Heart left ventricle (tissue), 16 donors: ENCODE measurements at regions of chr6 and their contacts with region 1.

Region 1: GRCh38 chr6:29976588-29977424 is 34.5 kb downstream of the HLA-A start:
- DNase-seq: peak; percentile 91 to 93 (median 92)
- ATAC-seq: peak; percentile 89 to 96 (median 95)
- H3K4me3 ChIP-seq: peak overlapping the region; percentile 28 to 69 (median 60)
- H3K27ac ChIP-seq: peak overlapping the region; percentile 87 to 99 (median 95)
- H3K4me1 ChIP-seq: peaks cover 0 to 28% (median 17%) of the 10 kb centered on the region in 12 donors
- H3K27me3 ChIP-seq: peaks cover 0 to 11% (median 0%) of the 10 kb centered on the region in 9 donors
- CTCF ChIP-seq: peak in 7 of 12 donors; percentile 12 to 48 (median 32)
- POLR2A ChIP-seq: peak in 1 of 2 donors; percentile 55

Region 2: GRCh38 chr6:29649701-29650673 is 326.8 kb before region 1 on chr6:
- intact Hi-C with region 1: no loop called
- DNase-seq: peak; percentile 98 to 99 (median 98)
- ATAC-seq: peak; percentile 95 to 98 (median 97)
- H3K4me3 ChIP-seq: peak overlapping the region in 11 of 12 donors; percentile 44 to 82 (median 68)
- H3K27ac ChIP-seq: peak overlapping the region; percentile 92 to 98 (median 96)
- H3K4me1 ChIP-seq: peaks cover 0 to 15% (median 5%) of the 10 kb centered on the region in 12 donors
- H3K27me3 ChIP-seq: peaks cover 0 to 2% (median 0%) of the 10 kb centered on the region in 9 donors
- CTCF ChIP-seq: peak; percentile 84 to 97 (median 94)
- POLR2A ChIP-seq: peak; percentile 35 to 89

Region 3: GRCh38 chr6:29752451-29753308 is 224.1 kb before region 1 on chr6:
- intact Hi-C with region 1: loop called in 1 of 10 experiments (anchors 5 kb)
- DNase-seq: peak; percentile 90 to 93 (median 93)
- ATAC-seq: peak; percentile 72 to 87 (median 86)
- H3K4me3 ChIP-seq: peak overlapping the region; percentile 44 to 84 (median 72)
- H3K27ac ChIP-seq: peak overlapping the region; percentile 74 to 97 (median 95)
- H3K4me1 ChIP-seq: peaks cover 0 to 34% (median 28%) of the 10 kb centered on the region in 12 donors
- H3K27me3 ChIP-seq: no peaks in the 10 kb centered on the region
- CTCF ChIP-seq: peak; percentile 87 to 100 (median 92)
- POLR2A ChIP-seq: peak in 1 of 2 donors; percentile 55

Region 4: GRCh38 chr6:29887819-29888776 is 88.7 kb before region 1 on chr6:
- intact Hi-C with region 1: loop called in 2 of 10 experiments (anchors 2 to 5 kb)
- DNase-seq: peak; percentile 68 to 91 (median 82)
- ATAC-seq: peak; percentile 78 to 92 (median 90)
- H3K4me3 ChIP-seq: peak overlapping the region in 11 of 12 donors; percentile 50 to 93 (median 70)
- H3K27ac ChIP-seq: peak overlapping the region in 11 of 12 donors; percentile 49 to 96 (median 87)
- H3K4me1 ChIP-seq: peaks cover 0 to 17% (median 0%) of the 10 kb centered on the region in 12 donors
- H3K27me3 ChIP-seq: no peaks in the 10 kb centered on the region
- CTCF ChIP-seq: no peak
- POLR2A ChIP-seq: no peak

Region 5: DNA sequence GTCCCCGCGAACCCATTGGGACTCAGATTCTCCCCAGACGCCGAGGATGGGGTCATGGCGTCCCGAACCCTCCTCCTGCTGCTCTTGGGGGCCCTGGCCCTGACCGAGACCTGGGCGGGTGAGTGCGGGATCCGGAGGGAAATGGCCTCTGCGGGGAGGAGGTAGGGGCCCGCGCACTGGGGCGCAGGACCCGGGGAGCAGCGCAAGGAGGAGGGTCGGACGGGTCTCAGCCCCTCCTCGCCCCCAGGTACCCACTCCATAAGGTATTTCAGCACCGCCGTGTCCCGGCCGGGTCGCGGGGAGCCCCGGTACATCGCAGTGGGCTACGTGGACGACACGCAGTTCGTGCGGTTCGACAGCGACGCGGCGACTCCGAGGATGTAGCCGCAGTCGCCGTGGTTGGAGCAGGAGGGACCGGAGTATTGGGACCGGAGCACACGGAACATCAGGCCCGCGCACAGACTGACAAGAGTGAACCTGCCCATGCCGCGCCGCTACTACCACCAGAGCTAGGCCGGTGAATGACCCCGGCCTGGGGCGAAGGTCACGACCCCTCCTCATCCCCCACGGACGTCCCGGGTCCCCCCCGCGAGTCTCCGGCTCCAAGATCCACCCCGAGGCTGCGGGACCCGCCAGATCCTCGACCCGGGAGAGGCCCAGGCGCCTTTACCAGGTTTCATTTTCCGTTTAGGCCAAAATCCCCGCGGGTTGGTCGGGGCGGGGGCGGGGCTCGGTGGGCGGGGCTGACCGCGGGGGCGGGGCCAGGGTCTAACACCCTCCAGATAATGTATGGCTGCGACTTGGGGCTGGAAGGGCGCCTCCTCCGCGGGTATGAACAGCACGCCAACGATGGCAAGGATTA is 50.2 kb before region 1 on chr6:
- intact Hi-C with region 1: loop called in 7 of 10 experiments (anchors 1 to 10 kb)
- DNase-seq: peak; percentile 69 to 87 (median 76)
- ATAC-seq: peak; percentile 69 to 92 (median 88)
- H3K4me3 ChIP-seq: peak overlapping the region in 11 of 12 donors; percentile 55 to 82 (median 65)
- H3K27ac ChIP-seq: peak overlapping the region in 11 of 12 donors; percentile 67 to 96 (median 88)
- H3K4me1 ChIP-seq: peaks cover 0 to 15% (median 0%) of the 10 kb centered on the region in 12 donors
- H3K27me3 ChIP-seq: no peaks in the 10 kb centered on the region
- CTCF ChIP-seq: no peak
- POLR2A ChIP-seq: peak in 1 of 2 donors; percentile 30

Region 6: GRCh38 chr6:29942275-29943052 is 34.3 kb before region 1 on chr6 and contains the start of gene HLA-A:
- intact Hi-C with region 1: loop called in 6 of 10 experiments (anchors 1 to 5 kb)
- DNase-seq: peak; percentile 94 to 97 (median 95)
- ATAC-seq: peak; percentile 97 to 99 (median 98)
- H3K4me3 ChIP-seq: peak within 1 kb of the TSS; percentile 53 to 92 (median 72)
- H3K27ac ChIP-seq: peak within 1 kb of the TSS; percentile 74 to 98 (median 90)
- H3K4me1 ChIP-seq: peaks cover 0 to 35% (median 0%) of the 10 kb centered on the region in 12 donors
- H3K27me3 ChIP-seq: no peaks in the 10 kb centered on the region
- CTCF ChIP-seq: no peak
- POLR2A ChIP-seq: peak; percentile 55 to 98
- total RNA-seq, gene HLA-A: 263 to 1,427 (median 361) TPM

Region 7: DNA sequence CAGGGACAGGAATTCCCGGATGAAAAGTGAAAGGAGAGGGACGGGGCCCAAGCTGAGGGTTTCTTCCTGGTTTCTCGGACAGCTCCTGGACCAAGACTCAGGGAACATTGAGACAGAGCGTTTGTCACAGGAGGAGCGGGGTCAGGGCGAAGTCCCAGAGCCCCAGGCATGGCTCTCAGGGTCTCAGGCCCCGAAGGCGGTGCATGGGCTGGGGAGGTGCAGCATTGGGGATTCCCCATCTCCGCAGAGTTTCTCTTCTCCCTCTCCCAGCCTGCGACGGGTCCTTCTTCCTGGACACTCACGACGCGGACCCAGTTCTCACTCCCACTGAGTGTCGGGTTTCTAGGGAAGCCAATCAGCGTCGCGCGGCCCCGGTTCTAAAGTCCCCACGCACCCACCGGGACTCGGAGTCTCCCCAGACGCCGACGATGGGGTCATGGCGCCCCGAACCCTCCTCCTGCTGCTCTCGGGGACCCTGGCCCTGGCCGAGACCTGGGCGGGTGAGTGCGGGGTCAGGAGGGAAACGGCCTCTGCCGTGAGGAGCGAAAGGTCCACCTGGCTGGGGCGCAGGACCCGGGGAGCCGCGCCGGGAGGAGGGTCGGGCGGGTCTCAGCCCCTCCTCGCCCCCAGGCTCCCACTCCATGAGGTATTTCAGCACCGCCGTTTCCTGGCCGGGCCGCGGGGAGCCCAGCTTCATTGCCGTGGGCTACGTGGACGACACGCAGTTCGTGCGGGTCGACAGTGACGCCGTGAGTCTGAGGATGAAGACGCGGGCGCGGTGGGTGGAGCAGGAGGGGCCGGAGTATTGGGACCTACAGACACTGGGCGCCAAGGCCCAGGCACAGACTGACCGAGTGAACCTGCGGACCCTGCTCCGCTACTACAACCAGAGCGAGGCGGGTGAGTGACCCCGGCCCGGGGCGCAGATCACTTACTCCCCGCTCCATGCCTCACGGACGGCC is 29.6 kb after region 1 on chr6:
- intact Hi-C with region 1: loop called in 1 of 10 experiments (anchors 2 kb)
- DNase-seq: peak; percentile 38 to 72 (median 53)
- ATAC-seq: peak; percentile 62 to 80 (median 70)
- H3K4me3 ChIP-seq: peak overlapping the region; percentile 43 to 82 (median 68)
- H3K27ac ChIP-seq: peak overlapping the region in 6 of 12 donors; percentile 10 to 49 (median 22)
- H3K4me1 ChIP-seq: peaks cover 0 to 19% (median 12%) of the 10 kb centered on the region in 12 donors
- H3K27me3 ChIP-seq: peaks cover 0 to 31% (median 10%) of the 10 kb centered on the region in 9 donors
- CTCF ChIP-seq: peak in 1 of 12 donors; percentile 10
- POLR2A ChIP-seq: no peak

Region 8: GRCh38 chr6:30061092-30061857 is 84.5 kb after region 1 on chr6 and contains the start of gene POLR1H:
- intact Hi-C with region 1: loop called in 1 of 10 experiments (anchors 5 kb)
- DNase-seq: peak; percentile 93 to 96 (median 94)
- ATAC-seq: peak; percentile 97 to 99 (median 98)
- H3K4me3 ChIP-seq: peak within 1 kb of the TSS; percentile 61 to 93 (median 73)
- H3K27ac ChIP-seq: peak within 1 kb of the TSS; percentile 57 to 93 (median 88)
- H3K4me1 ChIP-seq: peaks cover 3 to 42% (median 27%) of the 10 kb centered on the region in 12 donors
- H3K27me3 ChIP-seq: no peaks in the 10 kb centered on the region
- CTCF ChIP-seq: peak in 3 of 12 donors; percentile 8 to 13 (median 13)
- POLR2A ChIP-seq: peak; percentile 33 to 80
- total RNA-seq, gene POLR1H: 11.7 to 19.8 (median 14.7) TPM